Vagina (tissue), 2 donors: ENCODE measurements at regions of chr7 and their contacts with region 1.

Region 1: GRCh38 chr7:157022681-157023588 is 12.5 kb upstream of the MNX1 start:
- DNase-seq: no peak
- H3K4me3 ChIP-seq: no peak overlapping the region
- H3K27ac ChIP-seq: no peak overlapping the region
- H3K4me1 ChIP-seq: peaks cover 27% of the 10 kb centered on the region
- H3K27me3 ChIP-seq: peaks cover 36% of the 10 kb centered on the region
- CTCF ChIP-seq: no peak
- POLR2A ChIP-seq: no peak

Region 2: DNA sequence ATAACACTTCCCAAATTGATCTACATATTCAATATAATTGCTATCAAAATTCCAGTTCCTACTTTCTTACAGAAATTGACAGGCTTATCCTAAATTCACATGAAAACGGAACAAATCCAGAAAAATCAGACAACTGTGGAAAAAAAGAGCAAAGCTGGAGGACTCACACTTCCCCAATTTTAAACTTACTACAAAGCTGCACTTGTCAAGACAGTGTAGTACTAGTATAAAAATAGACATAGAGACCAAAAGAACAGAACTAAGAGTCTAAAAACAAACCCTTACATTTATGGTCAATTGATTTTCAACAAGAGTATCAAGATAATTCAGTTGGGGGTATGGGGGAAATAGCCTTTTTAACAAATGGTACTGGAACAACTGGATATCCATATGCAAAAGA is 157.4 kb before region 1 on chr7:
- intact Hi-C with region 1: no loop called
- DNase-seq: no peak
- H3K4me3 ChIP-seq: no peak overlapping the region
- H3K27ac ChIP-seq: no peak overlapping the region
- H3K4me1 ChIP-seq: no peaks in the 10 kb centered on the region
- H3K27me3 ChIP-seq: no peaks in the 10 kb centered on the region
- CTCF ChIP-seq: no peak
- POLR2A ChIP-seq: no peak

Region 3: GRCh38 chr7:157097569-157097968 is 74.6 kb after region 1 on chr7:
- intact Hi-C with region 1: no loop called
- DNase-seq: no peak
- H3K4me3 ChIP-seq: no peak overlapping the region
- H3K27ac ChIP-seq: no peak overlapping the region
- H3K4me1 ChIP-seq: no peaks in the 10 kb centered on the region
- H3K27me3 ChIP-seq: no peaks in the 10 kb centered on the region
- CTCF ChIP-seq: no peak
- POLR2A ChIP-seq: no peak

Region 4: GRCh38 chr7:158362912-158363905 is 1340.3 kb after region 1 on chr7:
- intact Hi-C with region 1: loop called (anchors 10 kb)
- DNase-seq: no peak
- H3K4me3 ChIP-seq: no peak overlapping the region
- H3K27ac ChIP-seq: no peak overlapping the region
- H3K4me1 ChIP-seq: no peaks in the 10 kb centered on the region
- H3K27me3 ChIP-seq: no peaks in the 10 kb centered on the region
- CTCF ChIP-seq: no peak
- POLR2A ChIP-seq: no peak